Motor neuron (in vitro differentiated cells): ENCODE measurements at regions of chr19 and their contacts with region 1.

Region 1: DNA sequence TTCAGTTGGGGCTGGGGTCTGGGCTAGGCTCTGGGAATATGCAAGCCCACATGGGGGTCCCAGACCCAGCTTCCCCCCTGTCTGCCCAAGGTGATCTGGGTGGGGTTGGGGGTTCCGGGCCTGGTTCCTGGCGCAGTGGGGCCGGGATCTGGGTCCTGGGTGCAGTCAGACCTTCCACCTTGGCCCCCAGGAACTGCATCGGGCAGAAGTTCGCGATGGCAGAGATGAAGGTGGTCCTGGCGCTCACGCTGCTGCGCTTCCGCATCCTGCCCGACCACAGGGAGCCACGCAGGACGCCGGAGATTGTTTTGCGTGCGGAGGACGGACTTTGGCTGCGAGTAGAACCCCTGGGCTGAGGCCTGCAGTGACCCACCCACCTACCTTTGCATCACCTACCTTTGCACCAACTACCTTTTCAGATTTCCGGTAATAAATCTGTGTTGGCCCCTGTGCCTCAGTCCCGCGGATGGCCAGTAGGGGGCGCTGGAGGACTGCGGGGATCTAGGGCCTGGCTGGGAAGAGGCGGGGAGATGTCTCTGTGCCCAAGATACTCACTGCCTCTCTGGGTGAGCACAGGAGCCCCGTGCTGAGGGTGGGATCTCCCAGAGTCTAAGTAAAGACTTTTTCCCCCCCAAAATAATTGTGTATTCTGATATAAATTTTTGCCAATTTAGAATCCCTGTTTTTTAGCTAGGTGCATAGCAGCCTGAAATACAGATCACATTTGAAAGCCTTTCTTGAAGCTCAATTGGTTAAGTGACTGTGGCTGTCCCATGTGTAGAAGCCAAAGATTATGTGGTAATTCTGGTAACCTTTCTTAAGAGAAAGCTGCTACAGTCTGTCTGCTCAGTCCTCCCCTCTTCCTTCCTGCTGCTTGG is 11.5 kb upstream of the CYP4F3 start:
- ATAC-seq: peak in 3 of 8 experiments; percentile 92 to 98 (median 95)
- H3K4me3 ChIP-seq: no peak overlapping the region
- H3K27ac ChIP-seq: no peak overlapping the region
- H3K4me1 ChIP-seq: no peaks in the 10 kb centered on the region

Region 2: GRCh38 chr19:15926484-15926883 is 297.2 kb after region 1 on chr19:
- in situ Hi-C with region 1: no loop called
- ATAC-seq: no peak
- H3K4me3 ChIP-seq: no peak overlapping the region
- H3K27ac ChIP-seq: no peak overlapping the region
- H3K4me1 ChIP-seq: no peaks in the 10 kb centered on the region

Region 3: DNA sequence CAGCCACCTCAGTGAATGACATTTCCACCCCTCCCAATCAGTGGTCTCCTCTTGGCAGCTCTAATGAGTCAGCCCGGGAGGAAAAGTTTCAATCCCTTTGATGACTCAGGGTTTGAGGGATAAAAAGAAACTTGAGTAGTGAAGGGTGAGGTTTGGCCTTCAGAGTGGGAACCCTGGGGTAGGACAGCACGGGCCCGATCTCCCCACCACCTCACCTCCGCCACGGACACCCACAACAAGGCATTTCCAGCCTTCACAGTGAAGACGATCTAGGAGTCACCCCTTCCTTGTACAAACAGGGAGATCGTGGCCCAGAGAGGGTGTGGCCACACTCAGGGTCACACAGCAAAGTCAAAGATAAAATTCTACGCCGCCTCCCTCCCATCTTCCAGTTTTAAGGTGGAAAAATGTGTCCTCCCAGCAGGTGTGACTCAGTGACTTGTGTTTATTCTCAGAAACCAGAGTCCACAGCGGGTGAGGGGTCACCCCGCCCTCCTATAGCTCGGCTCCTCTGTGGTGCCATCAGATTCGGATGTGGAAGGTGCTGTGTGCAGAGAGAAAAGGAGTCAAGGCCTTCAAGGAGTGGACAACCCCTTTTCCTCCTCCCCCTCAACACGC is 531.8 kb after region 1 on chr19:
- in situ Hi-C with region 1: loop called in 1 of 9 experiments (anchors 25 kb)
- ATAC-seq: peak in 2 of 8 experiments; percentile 76 to 77
- H3K4me3 ChIP-seq: no peak overlapping the region
- H3K27ac ChIP-seq: no peak overlapping the region
- H3K4me1 ChIP-seq: no peaks in the 10 kb centered on the region